Mammary epithelial cell (primary cell): ENCODE measurements at regions of chr7 and their contacts with region 1.

Region 1: DNA sequence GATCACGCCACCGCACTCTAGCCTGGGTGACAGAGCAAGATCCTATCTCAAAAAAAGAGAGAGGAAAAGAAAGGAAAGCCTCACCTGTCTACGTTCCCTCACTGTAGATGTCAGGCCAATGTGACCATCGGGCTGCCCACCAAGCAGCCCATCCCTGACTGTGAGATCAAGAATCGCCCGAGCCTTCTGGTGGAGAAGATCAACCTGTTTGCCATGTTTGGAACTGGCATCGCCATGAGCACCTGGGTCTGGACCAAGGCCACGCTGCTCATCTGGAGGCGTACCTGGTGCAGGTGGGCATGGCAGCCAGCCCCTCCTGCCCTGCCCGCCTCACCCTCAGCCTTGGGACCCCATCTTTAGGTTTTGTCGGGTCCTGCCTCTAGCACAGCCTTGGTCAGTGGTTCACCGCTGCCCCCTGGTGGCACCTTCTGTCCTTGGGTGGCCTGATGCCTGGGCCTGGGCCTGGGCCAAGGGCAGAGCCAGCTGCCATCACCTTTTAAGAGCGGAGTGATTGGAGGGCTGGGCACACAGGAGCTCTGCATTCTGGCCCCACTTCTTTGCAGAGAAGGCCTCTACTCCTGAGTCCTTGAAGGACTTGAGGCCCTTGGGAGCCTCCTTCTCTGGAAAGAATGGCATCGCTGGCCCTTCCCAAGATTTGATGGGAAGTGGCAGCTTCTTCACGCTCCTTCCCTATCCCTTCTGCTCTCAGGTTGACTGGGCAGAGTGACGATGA is 14.4 kb upstream of the AHCYL2 start:
- DNase-seq: peak; percentile 32
- H3K4me3 ChIP-seq: no peak overlapping the region
- H3K27ac ChIP-seq: no peak overlapping the region
- H3K4me1 ChIP-seq: no peaks in the 10 kb centered on the region
- H3K27me3 ChIP-seq: no peaks in the 10 kb centered on the region
- CTCF ChIP-seq: peak; percentile 76 to 91

Region 2: GRCh38 chr7:128425850-128426249 is 784.6 kb before region 1 on chr7:
- CTCF ChIA-PET with region 1: no interaction called
- dilution Hi-C with region 1: no loop called
- in situ Hi-C with region 1: no loop called
- intact Hi-C with region 1: loop called (anchors 5 kb)
- DNase-seq: peak; percentile 32
- H3K4me3 ChIP-seq: no peak overlapping the region
- H3K27ac ChIP-seq: no peak overlapping the region
- H3K4me1 ChIP-seq: peaks cover 3% of the 10 kb centered on the region
- H3K27me3 ChIP-seq: no peaks in the 10 kb centered on the region
- CTCF ChIP-seq: peak; percentile 92 to 98

Region 3: GRCh38 chr7:128940494-128941322 is 269.7 kb before region 1 on chr7:
- CTCF ChIA-PET with region 1: no interaction called
- dilution Hi-C with region 1: no loop called
- in situ Hi-C with region 1: no loop called
- intact Hi-C with region 1: no loop called
- DNase-seq: no peak
- H3K4me3 ChIP-seq: no peak overlapping the region
- H3K27ac ChIP-seq: no peak overlapping the region
- H3K4me1 ChIP-seq: peaks cover 12% of the 10 kb centered on the region
- H3K27me3 ChIP-seq: no peaks in the 10 kb centered on the region
- CTCF ChIP-seq: no peak

Region 4: DNA sequence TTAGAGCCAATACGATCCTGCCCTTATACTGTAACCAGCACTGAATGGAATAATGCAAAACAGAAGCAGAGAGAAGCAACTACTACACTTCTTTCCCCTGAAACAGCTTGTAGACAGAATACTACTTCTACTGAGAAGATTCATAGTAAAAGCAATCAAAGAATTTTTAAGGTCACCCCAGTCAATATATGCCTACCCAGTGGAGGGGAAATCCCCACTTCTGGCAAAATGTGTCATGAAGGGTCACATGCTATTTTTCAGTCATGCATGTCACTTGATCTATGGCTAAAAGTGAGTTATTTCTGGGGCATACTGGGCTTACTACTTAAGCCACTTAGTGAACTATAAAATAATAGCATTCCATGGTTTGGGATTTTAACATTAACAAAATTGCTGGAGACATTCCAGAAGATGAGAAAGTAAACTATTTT is 247.1 kb before region 1 on chr7:
- CTCF ChIA-PET with region 1: no interaction called
- dilution Hi-C with region 1: no loop called
- in situ Hi-C with region 1: no loop called
- intact Hi-C with region 1: no loop called
- DNase-seq: peak; percentile 64
- H3K4me3 ChIP-seq: no peak overlapping the region
- H3K27ac ChIP-seq: peak overlapping the region; percentile 87
- H3K4me1 ChIP-seq: peaks cover 30% of the 10 kb centered on the region
- H3K27me3 ChIP-seq: no peaks in the 10 kb centered on the region
- CTCF ChIP-seq: no peak

Region 5: DNA sequence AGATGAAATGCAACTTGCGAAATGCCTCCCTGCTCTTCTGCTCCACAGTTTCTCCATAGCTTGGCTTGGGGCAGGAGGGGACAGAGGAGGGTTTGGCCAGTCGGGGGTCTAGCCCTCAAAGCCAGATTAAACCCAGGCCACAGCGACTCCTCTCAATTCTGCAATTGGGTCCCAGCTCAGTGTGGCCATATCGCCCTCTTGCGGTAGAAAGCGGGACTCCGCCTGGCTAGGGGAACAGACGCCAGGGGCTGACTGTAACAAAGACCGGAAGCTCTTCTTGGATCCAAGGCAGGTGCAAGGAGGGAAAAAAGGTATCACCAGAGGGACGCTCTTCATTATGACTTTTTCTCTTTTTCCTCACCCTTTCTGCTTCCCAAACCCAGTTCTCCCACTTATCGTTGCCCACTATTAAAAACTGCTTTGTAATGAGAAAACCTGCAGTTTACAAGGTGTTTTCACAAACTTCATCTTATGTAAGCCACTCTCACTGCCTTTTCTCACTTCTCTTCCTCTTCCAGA is 118.9 kb before region 1 on chr7:
- CTCF ChIA-PET with region 1: no interaction called
- dilution Hi-C with region 1: no loop called
- in situ Hi-C with region 1: no loop called
- intact Hi-C with region 1: loop called (anchors 1 kb)
- DNase-seq: peak; percentile 52
- H3K4me3 ChIP-seq: no peak overlapping the region
- H3K27ac ChIP-seq: no peak overlapping the region
- H3K4me1 ChIP-seq: no peaks in the 10 kb centered on the region
- H3K27me3 ChIP-seq: no peaks in the 10 kb centered on the region
- CTCF ChIP-seq: peak; percentile 98 to 100

Region 6: GRCh38 chr7:129169171-129169671 is 41.2 kb before region 1 on chr7:
- CTCF ChIA-PET with region 1: interaction called, 26 read pairs
- dilution Hi-C with region 1: loop called (anchors 5 kb)
- in situ Hi-C with region 1: loop called (anchors 5 kb)
- intact Hi-C with region 1: loop called (anchors 1 kb)
- DNase-seq: no peak
- H3K4me3 ChIP-seq: peak overlapping the region in 2 of 3 experiments; percentile 28 to 34
- H3K27ac ChIP-seq: no peak overlapping the region
- H3K4me1 ChIP-seq: peaks cover 12% of the 10 kb centered on the region
- H3K27me3 ChIP-seq: no peaks in the 10 kb centered on the region
- CTCF ChIP-seq: no peak

Region 7: DNA sequence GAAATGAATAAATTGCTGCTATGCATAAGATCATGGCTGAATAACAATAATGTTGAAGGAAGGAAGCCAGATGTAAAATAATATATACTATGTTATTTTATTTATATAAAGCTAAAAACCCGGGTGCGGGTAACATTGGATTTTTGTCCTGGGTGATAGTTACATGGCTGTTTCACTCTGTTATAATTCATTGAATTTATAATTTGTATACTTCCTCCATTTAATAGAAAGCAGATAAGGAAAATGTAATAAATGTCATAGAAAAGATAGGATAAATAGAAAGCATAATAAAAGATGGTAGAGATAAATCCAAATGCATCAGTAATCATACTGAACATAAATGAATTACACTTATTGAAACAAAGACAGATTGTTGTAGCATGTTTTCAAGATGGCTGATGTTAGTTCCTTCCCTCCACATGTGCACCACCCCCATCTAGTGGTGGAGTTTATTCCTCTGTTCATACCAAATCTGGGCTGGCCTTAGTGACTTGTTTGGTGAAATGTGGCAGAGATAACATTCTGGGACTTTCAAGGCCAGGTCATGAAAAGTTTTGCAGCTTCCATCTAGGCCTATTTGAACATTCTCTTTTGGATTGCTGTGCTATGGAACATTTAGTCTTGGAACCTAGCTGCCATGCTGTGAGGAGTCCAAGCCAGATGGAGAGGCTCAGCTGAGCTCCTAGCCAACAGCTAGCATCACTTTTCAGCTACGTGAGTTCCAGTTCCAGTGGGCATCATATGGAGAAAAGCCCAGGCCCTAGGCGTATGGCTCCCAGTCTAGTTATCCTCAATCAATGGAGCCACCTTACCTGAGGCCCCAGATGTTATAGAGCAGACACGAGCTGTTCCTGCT is 61.3 kb after region 1 on chr7:
- CTCF ChIA-PET with region 1: no interaction called
- dilution Hi-C with region 1: loop called (anchors 5 kb)
- in situ Hi-C with region 1: no loop called
- intact Hi-C with region 1: no loop called
- DNase-seq: peak; percentile 54
- H3K4me3 ChIP-seq: no peak overlapping the region
- H3K27ac ChIP-seq: no peak overlapping the region
- H3K4me1 ChIP-seq: no peaks in the 10 kb centered on the region
- H3K27me3 ChIP-seq: no peaks in the 10 kb centered on the region
- CTCF ChIP-seq: peak; percentile 78 to 86

Region 8: GRCh38 chr7:129615018-129615417 is 404.6 kb after region 1 on chr7:
- CTCF ChIA-PET with region 1: no interaction called
- dilution Hi-C with region 1: no loop called
- in situ Hi-C with region 1: no loop called
- intact Hi-C with region 1: no loop called
- DNase-seq: peak; percentile 63
- H3K4me3 ChIP-seq: no peak overlapping the region
- H3K27ac ChIP-seq: no peak overlapping the region
- H3K4me1 ChIP-seq: peaks cover 28% of the 10 kb centered on the region
- H3K27me3 ChIP-seq: no peaks in the 10 kb centered on the region
- CTCF ChIP-seq: no peak